CD4-positive, alpha-beta memory T cell (primary cell): ENCODE measurements at regions of chr4 and their contacts with region 1.

Region 1: GRCh38 chr4:54961357-54961975 is 163.9 kb downstream of the KDR start:
- DNase-seq: peak in 1 of 5 donors; percentile 26
- H3K4me3 ChIP-seq: no peak overlapping the region
- H3K4me3 Mint-ChIP-seq: no peak overlapping the region
- H3K27ac ChIP-seq: no peak overlapping the region
- H3K27ac Mint-ChIP-seq: peak overlapping the region in 2 of 7 donors; percentile 5 to 52
- H3K4me1 ChIP-seq: peaks cover 11% of the 10 kb centered on the region
- H3K4me1 Mint-ChIP-seq: peaks cover 6 to 24% (median 15%) of the 10 kb centered on the region in 4 donors
- H3K27me3 ChIP-seq: no peaks in the 10 kb centered on the region
- H3K27me3 Mint-ChIP-seq: no peaks in the 10 kb centered on the region

Region 2: DNA sequence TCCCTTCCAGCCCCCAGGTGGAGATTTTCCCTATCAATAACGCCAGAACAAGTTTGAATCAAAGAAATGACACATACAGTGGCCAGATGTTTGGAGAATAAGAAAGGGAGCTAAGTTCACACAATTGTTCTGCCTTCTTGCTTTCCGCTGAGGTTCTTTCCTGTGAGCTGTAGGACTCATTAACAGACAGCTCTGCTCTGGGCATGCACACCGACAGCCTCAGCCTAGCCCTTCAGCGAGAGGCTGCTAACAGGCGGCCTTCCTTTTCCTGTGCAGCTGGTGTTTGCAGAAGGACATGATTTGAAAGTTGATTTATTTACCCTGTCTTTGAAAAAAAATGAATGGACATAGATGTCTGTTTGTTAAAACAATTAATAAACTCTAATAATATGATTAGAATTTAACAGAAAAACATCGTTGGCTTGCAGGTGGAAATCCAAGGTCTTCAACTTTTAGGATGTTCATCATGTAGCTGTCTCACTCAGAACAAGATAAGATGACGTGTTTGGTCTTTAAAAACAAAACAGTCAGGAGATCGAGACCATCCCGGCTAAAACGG is 19.4 kb before region 1 on chr4:
- CTCF ChIA-PET with region 1: interaction called, 10 read pairs
- POLR2A ChIA-PET with region 1: interaction called, 3 read pairs
- intact Hi-C with region 1: loop called (anchors 2 kb)
- DNase-seq: peak; percentile 62 to 80 (median 68)
- H3K4me3 ChIP-seq: peak overlapping the region in 1 of 2 donors; percentile 6
- H3K4me3 Mint-ChIP-seq: peak overlapping the region; percentile 58 to 83 (median 78)
- H3K27ac ChIP-seq: peak overlapping the region; percentile 49
- H3K27ac Mint-ChIP-seq: peak overlapping the region; percentile 86 to 96 (median 93)
- H3K4me1 ChIP-seq: peaks cover 28% of the 10 kb centered on the region
- H3K4me1 Mint-ChIP-seq: peaks cover 31 to 74% (median 50%) of the 10 kb centered on the region in 4 donors
- H3K27me3 ChIP-seq: no peaks in the 10 kb centered on the region
- H3K27me3 Mint-ChIP-seq: peaks cover 0 to 1% of the 10 kb centered on the region in 2 donors